PC-9 (cell line): ENCODE measurements at regions of chr7 and their contacts with region 1.

Region 1: GRCh38 chr7:134778941-134779740 is at the start of gene CALD1:
- DNase-seq: peak; percentile 90 to 96
- H3K4me3 ChIP-seq: peak within 1 kb of the TSS; percentile 56
- H3K27ac ChIP-seq: peak within 1 kb of the TSS; percentile 60
- H3K4me1 ChIP-seq: peaks cover 33% of the 10 kb centered on the region
- H3K27me3 ChIP-seq: no peaks in the 10 kb centered on the region
- CTCF ChIP-seq: no peak
- total RNA-seq, gene CALD1: 84.4 and 97.5 TPM in 2 replicates

Region 2: GRCh38 chr7:134632937-134633540 is 146.1 kb before region 1 on chr7:
- CTCF ChIA-PET with region 1: no interaction called
- POLR2A ChIA-PET with region 1: no interaction called
- intact Hi-C with region 1: loop called (anchors 5 kb)
- DNase-seq: peak in 1 of 2 experiments; percentile 32
- H3K4me3 ChIP-seq: no peak overlapping the region
- H3K27ac ChIP-seq: no peak overlapping the region
- H3K4me1 ChIP-seq: peaks cover 6% of the 10 kb centered on the region
- H3K27me3 ChIP-seq: no peaks in the 10 kb centered on the region
- CTCF ChIP-seq: peak; percentile 83

Region 3: GRCh38 chr7:134766779-134767519 is 12.2 kb before region 1 on chr7:
- CTCF ChIA-PET with region 1: no interaction called
- POLR2A ChIA-PET with region 1: interaction called, 20 read pairs
- intact Hi-C with region 1: no loop called
- DNase-seq: peak in 1 of 2 experiments; percentile 45
- H3K4me3 ChIP-seq: no peak overlapping the region
- H3K27ac ChIP-seq: no peak overlapping the region
- H3K4me1 ChIP-seq: peaks cover 12% of the 10 kb centered on the region; the same call in 1 of the 2 replicates
- H3K27me3 ChIP-seq: no peaks in the 10 kb centered on the region
- CTCF ChIP-seq: no peak

Region 4: GRCh38 chr7:134891262-134891695 is 112.1 kb after region 1 on chr7:
- CTCF ChIA-PET with region 1: no interaction called
- POLR2A ChIA-PET with region 1: no interaction called
- intact Hi-C with region 1: loop called (anchors 1 kb)
- DNase-seq: peak; percentile 85 to 89
- H3K4me3 ChIP-seq: peak overlapping the region; percentile 63
- H3K27ac ChIP-seq: peak overlapping the region; percentile 43
- H3K4me1 ChIP-seq: peaks cover 43% of the 10 kb centered on the region
- H3K27me3 ChIP-seq: no peaks in the 10 kb centered on the region
- CTCF ChIP-seq: no peak